H1 (cell line): ENCODE measurements at regions of chr1 and their contacts with region 1.

Region 1: GRCh38 chr1:160675641-160676410 is 29.0 kb upstream of the SLAMF1 start:
- DNase-seq: peak; percentile 43 to 71
- H3K4me3 ChIP-seq: no peak overlapping the region
- H3K27ac ChIP-seq: no peak overlapping the region
- H3K4me1 ChIP-seq: peaks cover 16 to 27% (median 16%) of the 10 kb centered on the region in 4 experiments
- H3K27me3 ChIP-seq: no peaks in the 10 kb centered on the region
- CTCF ChIP-seq: peak; percentile 74 to 91 (median 88)
- EP300 ChIP-seq: no peak
- POLR2A ChIP-seq: no peak
- RAD21 ChIP-seq: peak; percentile 68 to 81

Region 2: GRCh38 chr1:160420881-160421842 is 254.7 kb before region 1 on chr1:
- CTCF ChIA-PET with region 1: no interaction called
- POLR2A ChIA-PET with region 1: no interaction called
- DNase-seq: no peak
- H3K4me3 ChIP-seq: no peak overlapping the region
- H3K27ac ChIP-seq: no peak overlapping the region
- H3K4me1 ChIP-seq: no peaks in the 10 kb centered on the region
- H3K27me3 ChIP-seq: no peaks in the 10 kb centered on the region
- CTCF ChIP-seq: no peak
- EP300 ChIP-seq: no peak
- POLR2A ChIP-seq: no peak
- RAD21 ChIP-seq: no peak

Region 3: DNA sequence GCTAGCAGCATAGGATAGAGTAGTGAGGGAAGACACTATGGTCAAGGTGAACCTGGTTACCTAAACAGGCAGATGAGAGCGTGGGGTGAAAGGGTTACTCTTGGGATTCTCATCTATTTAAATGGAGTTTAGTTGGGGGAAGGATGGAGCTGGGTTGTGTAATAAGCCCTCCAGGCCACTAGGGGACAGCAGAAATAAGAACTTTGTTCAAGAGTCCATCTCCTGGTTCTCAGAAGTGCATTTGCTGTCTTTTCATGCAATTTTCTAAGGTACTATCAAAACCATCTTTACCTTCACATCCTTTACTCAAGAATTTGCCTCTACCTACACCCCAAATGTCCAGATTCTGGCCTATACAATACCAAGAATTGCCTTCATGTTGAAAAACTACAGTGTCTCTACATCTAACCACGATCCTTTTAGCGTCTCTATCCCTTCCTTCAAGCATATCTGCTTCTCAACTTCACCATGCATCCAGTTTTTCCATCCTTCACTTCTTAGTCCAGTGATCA is 57.0 kb before region 1 on chr1:
- CTCF ChIA-PET with region 1: interaction called, 27 read pairs
- POLR2A ChIA-PET with region 1: no interaction called
- DNase-seq: no peak
- H3K4me3 ChIP-seq: no peak overlapping the region
- H3K27ac ChIP-seq: no peak overlapping the region
- H3K4me1 ChIP-seq: no peaks in the 10 kb centered on the region; a peak in 1 of 7 replicates
- H3K27me3 ChIP-seq: no peaks in the 10 kb centered on the region
- CTCF ChIP-seq: peak in 2 of 3 experiments; percentile 39 to 69; a peak in 3 of 4 replicates
- EP300 ChIP-seq: no peak
- POLR2A ChIP-seq: no peak
- RAD21 ChIP-seq: peak in 1 of 2 experiments; percentile 40; a peak in 1 of 4 replicates

Region 4: DNA sequence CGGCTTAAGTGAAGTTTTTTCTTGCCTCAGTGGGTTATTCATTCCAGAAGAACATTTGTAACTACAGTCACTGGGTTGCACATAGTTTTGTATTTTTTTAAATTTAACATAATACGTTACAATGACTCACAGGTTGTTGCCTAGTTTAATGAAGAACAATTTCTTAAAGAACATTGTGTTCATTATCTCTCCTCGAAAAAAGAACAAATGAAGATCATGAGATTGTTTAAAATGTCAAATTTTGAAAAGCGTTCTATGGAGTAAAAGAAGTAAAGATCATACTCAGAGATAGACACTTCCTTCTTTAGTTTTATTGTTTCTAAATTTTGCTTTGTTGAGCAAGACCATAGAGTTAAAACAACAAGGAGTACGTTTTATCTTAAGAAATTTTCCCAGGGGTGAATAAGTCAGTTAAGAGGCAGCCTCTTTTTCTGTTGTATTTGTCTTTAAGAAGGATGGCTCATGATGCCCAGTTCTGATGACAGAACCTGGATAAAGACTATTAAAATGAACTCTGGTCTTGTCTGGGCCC is 18.5 kb before region 1 on chr1:
- CTCF ChIA-PET with region 1: interaction called, 32 read pairs
- POLR2A ChIA-PET with region 1: interaction called, 4 read pairs
- DNase-seq: no peak
- H3K4me3 ChIP-seq: no peak overlapping the region
- H3K27ac ChIP-seq: no peak overlapping the region
- H3K4me1 ChIP-seq: peaks cover 0 to 11% (median 6%) of the 10 kb centered on the region in 4 experiments; a peak in 2 of 7 replicates
- H3K27me3 ChIP-seq: no peaks in the 10 kb centered on the region; a peak in 1 of 7 replicates
- CTCF ChIP-seq: no peak
- EP300 ChIP-seq: no peak
- POLR2A ChIP-seq: no peak
- RAD21 ChIP-seq: no peak

Region 5: DNA sequence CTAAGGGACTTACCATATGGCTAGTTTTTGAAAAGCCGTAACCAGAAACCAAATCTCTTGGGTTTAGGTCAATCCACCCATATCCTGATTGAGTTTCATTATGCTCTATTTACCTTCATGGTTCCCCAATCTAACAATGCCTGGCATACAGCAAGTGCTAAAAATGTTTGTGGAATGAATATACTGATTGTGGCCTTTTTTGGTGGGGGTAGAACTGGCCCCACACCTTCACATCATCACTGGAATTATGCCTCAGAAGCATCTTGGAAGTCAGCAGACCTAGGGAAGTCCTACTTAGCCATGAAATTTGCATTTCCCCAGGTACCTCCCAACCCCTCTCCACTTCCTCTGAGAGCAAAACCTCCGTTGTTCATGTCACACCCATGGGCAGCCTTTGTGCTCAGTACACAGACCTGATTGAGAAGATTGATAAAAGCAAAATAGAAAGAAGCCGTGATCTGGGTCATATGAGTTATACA is 11.2 kb before region 1 on chr1:
- CTCF ChIA-PET with region 1: interaction called, 32 read pairs
- POLR2A ChIA-PET with region 1: no interaction called
- DNase-seq: no peak
- H3K4me3 ChIP-seq: no peak overlapping the region
- H3K27ac ChIP-seq: no peak overlapping the region
- H3K4me1 ChIP-seq: peaks cover 0 to 8% (median 0%) of the 10 kb centered on the region in 4 experiments; a peak in 1 of 7 replicates
- H3K27me3 ChIP-seq: no peaks in the 10 kb centered on the region
- CTCF ChIP-seq: no peak
- EP300 ChIP-seq: no peak
- POLR2A ChIP-seq: no peak
- RAD21 ChIP-seq: no peak

Region 6: DNA sequence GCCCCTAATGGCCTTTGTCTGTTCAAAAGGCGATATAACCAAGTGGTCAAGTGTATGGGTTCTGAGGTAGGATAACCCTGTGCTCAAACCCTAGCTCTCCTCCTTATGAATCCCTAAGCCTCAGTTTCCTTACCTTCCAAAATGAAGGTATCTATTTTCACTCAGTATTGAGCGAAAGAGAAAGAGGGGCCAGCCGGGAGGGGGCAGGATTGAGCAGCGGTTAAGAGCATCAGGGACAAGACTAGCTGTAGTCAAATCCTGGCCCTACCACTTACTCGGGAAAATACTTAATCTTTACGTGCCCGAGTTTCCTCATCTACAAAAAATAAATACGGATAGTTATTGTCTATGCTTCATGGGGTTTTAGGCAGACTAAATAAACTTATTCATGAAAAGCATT is 145.8 kb after region 1 on chr1:
- CTCF ChIA-PET with region 1: interaction called, 11 read pairs
- POLR2A ChIA-PET with region 1: no interaction called
- DNase-seq: peak in 1 of 2 experiments; percentile 76
- H3K4me3 ChIP-seq: no peak overlapping the region
- H3K27ac ChIP-seq: no peak overlapping the region
- H3K4me1 ChIP-seq: peaks cover 0 to 6% (median 2%) of the 10 kb centered on the region in 4 experiments; a peak in 2 of 7 replicates
- H3K27me3 ChIP-seq: no peaks in the 10 kb centered on the region
- CTCF ChIP-seq: peak; percentile 43 to 59 (median 46)
- EP300 ChIP-seq: no peak
- POLR2A ChIP-seq: no peak
- RAD21 ChIP-seq: peak in 1 of 2 experiments; percentile 55; a peak in 3 of 4 replicates

Region 7: DNA sequence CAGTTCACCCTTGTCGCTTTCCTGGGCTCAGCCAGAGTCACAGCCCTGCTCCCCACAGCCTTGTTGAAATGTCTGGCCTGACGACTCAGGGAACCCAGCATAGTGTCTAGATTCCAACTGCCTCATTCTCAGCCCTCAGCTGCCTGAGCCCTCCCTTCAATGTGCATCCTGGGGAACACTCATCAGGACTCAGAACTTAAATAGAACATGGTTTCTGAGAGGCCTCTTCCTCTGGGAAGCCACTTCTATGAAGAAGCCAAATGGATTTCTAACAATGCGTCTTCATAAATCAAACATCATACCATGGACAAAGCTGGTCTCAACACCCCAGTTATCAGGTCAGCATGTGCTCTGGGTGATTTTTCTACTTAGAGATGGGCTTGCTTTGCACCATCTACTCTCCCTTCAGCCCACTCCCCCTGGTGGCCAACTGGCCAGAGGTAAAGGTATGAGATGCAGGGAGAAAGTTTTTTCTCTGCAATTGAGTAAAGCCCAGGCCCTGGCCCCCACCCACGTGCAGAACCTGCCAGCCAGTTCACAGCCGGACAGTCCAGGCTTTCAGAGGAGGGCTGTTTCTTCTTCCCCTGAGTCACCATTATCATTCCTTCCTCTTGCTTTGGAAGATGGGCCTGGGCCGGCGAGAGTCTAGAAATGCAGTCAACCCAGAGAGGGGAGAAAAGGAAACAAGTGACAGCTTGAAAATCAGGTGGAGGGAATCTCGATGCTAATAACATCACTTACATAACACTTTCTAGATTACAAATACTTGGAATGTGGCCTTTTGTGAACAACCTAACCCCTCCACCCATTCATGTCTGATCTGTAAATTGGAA is 154.7 kb after region 1 on chr1:
- CTCF ChIA-PET with region 1: interaction called, 51 read pairs
- POLR2A ChIA-PET with region 1: no interaction called
- DNase-seq: peak in 1 of 2 experiments; percentile 91
- H3K4me3 ChIP-seq: no peak overlapping the region
- H3K27ac ChIP-seq: no peak overlapping the region
- H3K4me1 ChIP-seq: no peaks in the 10 kb centered on the region
- H3K27me3 ChIP-seq: no peaks in the 10 kb centered on the region
- CTCF ChIP-seq: peak; percentile 82 to 93 (median 89)
- EP300 ChIP-seq: no peak
- POLR2A ChIP-seq: no peak
- RAD21 ChIP-seq: peak; percentile 75 to 80